HEK293T (cell line): ENCODE measurements at regions of chr14 and their contacts with region 1.

Region 1: GRCh38 chr14:58637391-58638230 is at the start of gene DACT1:
- DNase-seq: peak; percentile 55

Region 2: GRCh38 chr14:58501214-58501816 is 136.3 kb before region 1 on chr14:
- CTCF ChIA-PET with region 1: interaction called, 15 read pairs
- POLR2A ChIA-PET with region 1: interaction called, 3 read pairs
- DNase-seq: peak; percentile 43

Region 3: DNA sequence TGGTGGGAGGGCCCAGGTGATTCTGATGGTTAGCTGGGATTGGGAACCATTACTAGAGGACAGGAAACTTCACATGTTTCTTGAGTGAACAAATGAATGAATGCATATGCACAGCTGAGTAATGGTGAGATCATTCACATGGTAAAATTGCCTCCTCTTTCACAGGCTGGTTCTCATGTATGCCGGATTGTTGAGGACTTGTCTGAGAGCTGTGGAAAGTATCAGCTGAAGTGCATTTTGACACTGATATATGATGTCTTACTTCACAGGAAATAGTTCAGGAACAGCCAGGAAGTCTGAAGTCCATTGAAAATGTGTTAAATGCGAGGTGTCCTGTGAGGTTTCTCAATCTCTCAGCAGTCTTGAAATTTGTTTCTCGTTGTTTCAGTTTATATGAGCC is 77.4 kb before region 1 on chr14:
- CTCF ChIA-PET with region 1: no interaction called
- POLR2A ChIA-PET with region 1: no interaction called
- DNase-seq: no peak

Region 4: DNA sequence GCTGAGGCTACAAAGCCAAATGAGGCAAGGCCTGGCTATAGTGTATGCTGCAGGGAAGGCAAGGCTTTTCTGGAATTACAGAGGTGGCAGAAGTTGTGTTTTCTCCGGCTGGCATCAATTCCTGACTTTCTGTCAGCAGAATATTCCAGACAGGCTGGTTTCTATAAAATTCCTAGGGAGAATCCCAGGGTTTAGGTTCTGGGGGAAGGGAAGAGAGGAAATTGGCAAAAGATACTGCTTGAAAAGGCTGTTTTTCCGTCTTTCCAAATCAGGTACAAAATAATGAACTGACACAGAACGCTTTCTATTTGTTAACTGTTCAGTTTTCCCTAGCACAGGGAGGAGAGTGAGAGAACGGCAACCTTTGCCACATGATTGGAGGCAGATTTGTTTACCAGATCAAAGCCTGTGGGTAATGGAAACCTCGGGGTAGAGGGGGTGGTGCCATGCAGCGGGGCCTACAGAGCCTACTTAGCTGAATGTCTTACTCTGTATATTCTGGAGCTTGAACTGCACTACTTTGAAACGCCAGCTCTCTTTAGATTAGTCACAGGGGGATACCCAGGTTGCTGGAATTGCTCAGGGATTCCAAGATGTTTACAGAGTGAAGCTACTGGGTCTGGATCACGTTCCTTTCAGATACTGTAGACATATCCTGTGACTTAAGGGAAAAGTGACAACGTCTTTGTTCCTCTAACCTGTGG is 65.7 kb before region 1 on chr14:
- CTCF ChIA-PET with region 1: no interaction called
- POLR2A ChIA-PET with region 1: no interaction called
- DNase-seq: no peak